ENCODE measurements at regions of chr1 and their contacts with region 1.

Region 1: GRCh38 chr1:116418091-116418830 is 45.2 kb downstream of the ATP1A1 start:
- DNase-seq: peak; percentile 72
- H3K4me3 ChIP-seq: peak overlapping the region; percentile 61 to 89 (median 80)
- H3K27ac ChIP-seq: peak overlapping the region; percentile 42
- H3K4me1 ChIP-seq: peaks cover 11% of the 10 kb centered on the region
- H3K27me3 ChIP-seq: no peaks in the 10 kb centered on the region
- CTCF ChIP-seq: no peak
- POLR2A ChIP-seq: no peak

Region 2: GRCh38 chr1:116365353-116365780 is 52.9 kb before region 1 on chr1:
- CTCF ChIA-PET with region 1: no interaction called
- POLR2A ChIA-PET with region 1: no interaction called
- dilution Hi-C with region 1: no loop called
- intact Hi-C with region 1: no loop called
- DNase-seq: no peak
- H3K4me3 ChIP-seq: no peak overlapping the region
- H3K27ac ChIP-seq: no peak overlapping the region
- H3K4me1 ChIP-seq: no peaks in the 10 kb centered on the region
- H3K27me3 ChIP-seq: peaks cover 12 to 20% of the 10 kb centered on the region in 2 experiments
- CTCF ChIP-seq: no peak
- POLR2A ChIP-seq: no peak

Region 3: DNA sequence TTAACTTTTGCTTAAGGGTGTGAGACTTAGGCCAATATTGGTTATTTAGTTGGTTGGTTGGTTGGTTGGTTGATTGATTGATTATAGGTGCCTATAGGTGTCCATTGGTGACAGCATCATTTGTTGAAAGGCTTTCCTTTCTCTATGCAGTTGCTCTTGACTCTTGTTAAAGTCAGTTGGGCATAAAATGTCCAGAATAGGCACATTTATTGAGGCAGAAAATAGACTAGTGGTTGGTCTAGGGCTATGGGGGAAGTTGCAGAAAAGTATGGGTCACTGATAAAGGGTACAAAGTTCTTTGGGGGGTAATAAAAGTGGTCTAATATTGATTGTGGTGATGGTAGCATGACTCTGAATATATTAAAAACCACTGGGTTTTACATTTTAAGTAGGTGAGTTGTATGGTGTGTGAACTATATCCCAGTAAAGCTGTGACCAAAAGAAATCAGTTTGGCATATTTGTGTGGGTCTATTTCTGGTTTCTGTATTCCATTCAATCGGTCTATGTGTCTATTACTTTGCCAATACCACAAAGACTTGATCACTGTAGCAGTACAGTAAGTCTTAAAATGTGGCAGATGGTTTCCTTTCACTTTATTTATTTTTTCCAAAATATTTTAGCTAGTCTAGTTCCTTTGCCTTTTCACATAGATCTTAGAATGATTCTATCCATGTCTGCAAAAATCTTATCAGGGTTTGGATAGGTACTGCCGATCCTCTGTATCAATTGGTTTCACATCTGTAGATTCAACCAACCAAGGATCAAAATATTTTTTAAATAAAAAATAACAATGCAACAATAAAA is 17.7 kb after region 1 on chr1:
- CTCF ChIA-PET with region 1: interaction called, 9 read pairs
- POLR2A ChIA-PET with region 1: no interaction called
- dilution Hi-C with region 1: no loop called
- intact Hi-C with region 1: loop called (anchors 1 kb)
- DNase-seq: no peak
- H3K4me3 ChIP-seq: no peak overlapping the region
- H3K27ac ChIP-seq: no peak overlapping the region
- H3K4me1 ChIP-seq: peaks cover 24% of the 10 kb centered on the region
- H3K27me3 ChIP-seq: no peaks in the 10 kb centered on the region
- CTCF ChIP-seq: no peak
- POLR2A ChIP-seq: no peak

Region 4: GRCh38 chr1:116465845-116466685 is 47.8 kb after region 1 on chr1:
- CTCF ChIA-PET with region 1: no interaction called
- POLR2A ChIA-PET with region 1: no interaction called
- dilution Hi-C with region 1: no loop called
- intact Hi-C with region 1: loop called (anchors 2 kb)
- DNase-seq: no peak
- H3K4me3 ChIP-seq: no peak overlapping the region
- H3K27ac ChIP-seq: no peak overlapping the region
- H3K4me1 ChIP-seq: no peaks in the 10 kb centered on the region
- H3K27me3 ChIP-seq: peaks cover 0 to 4% of the 10 kb centered on the region in 2 experiments
- CTCF ChIP-seq: no peak
- POLR2A ChIP-seq: no peak